AG04449 (cell line): ENCODE measurements at regions of chr6 and their contacts with region 1.

Region 1: GRCh38 chr6:41424370-41425058 is 89.1 kb downstream of the NCR2 start:
- DNase-seq: peak; percentile 19
- H3K4me3 ChIP-seq: no peak overlapping the region
- CTCF ChIP-seq: peak; percentile 85

Region 2: GRCh38 chr6:41392246-41392645 is 32.3 kb before region 1 on chr6:
- CTCF ChIA-PET with region 1: interaction called, 32 read pairs
- POLR2A ChIA-PET with region 1: no interaction called
- DNase-seq: no peak
- H3K4me3 ChIP-seq: no peak overlapping the region
- CTCF ChIP-seq: no peak

Region 3: DNA sequence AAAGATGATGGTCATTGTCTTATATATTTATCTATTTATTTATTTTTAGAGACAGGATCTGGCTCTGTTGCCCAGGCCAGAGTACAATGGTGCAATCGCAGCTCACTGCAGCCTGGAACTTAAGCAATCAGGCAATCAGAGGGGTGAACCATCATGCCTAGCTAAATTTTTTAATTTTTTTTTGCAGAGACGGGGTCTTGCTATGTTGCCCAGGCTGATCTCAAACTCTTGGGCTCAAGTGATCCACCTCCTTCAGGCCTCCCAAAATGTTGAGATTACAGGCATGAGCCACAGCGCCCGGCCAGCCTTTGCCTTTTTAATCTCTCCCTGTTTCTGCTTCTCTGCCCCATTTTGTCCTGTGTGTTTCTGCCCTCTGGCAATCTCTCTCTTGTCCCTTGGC is 13.1 kb after region 1 on chr6:
- CTCF ChIA-PET with region 1: interaction called, 16 read pairs
- POLR2A ChIA-PET with region 1: no interaction called
- DNase-seq: no peak
- H3K4me3 ChIP-seq: no peak overlapping the region
- CTCF ChIP-seq: no peak

Region 4: GRCh38 chr6:41463062-41463930 is 38.8 kb after region 1 on chr6:
- CTCF ChIA-PET with region 1: interaction called, 21 read pairs
- POLR2A ChIA-PET with region 1: no interaction called
- DNase-seq: no peak
- H3K4me3 ChIP-seq: no peak overlapping the region
- CTCF ChIP-seq: peak; percentile 59

Region 5: GRCh38 chr6:41581381-41581991 is 157.0 kb after region 1 on chr6:
- CTCF ChIA-PET with region 1: interaction called, 50 read pairs
- POLR2A ChIA-PET with region 1: no interaction called
- DNase-seq: no peak
- H3K4me3 ChIP-seq: no peak overlapping the region
- CTCF ChIP-seq: no peak